ENCODE measurements at regions of chr15 and their contacts with region 1.

Region 1: DNA sequence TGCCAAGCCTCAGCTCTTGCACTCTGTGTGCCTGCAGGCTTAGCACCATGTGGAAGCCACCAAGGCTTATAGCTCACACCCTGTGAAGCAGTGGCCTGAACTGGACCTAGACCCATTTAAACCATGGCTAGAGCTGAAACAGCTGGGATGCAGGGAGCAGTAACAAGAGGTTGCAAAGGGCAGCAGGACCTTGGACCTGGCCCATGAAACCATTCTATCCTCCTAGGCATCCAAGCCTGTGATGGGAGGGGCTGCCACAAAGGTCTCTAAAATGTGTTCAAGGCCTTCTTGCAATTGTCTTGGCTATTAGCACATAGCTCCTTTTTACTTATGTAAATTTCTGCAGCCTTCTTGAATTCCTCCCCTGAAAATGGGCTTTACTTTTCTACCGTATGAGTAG is 57.9 kb upstream of the NPAP1 start:
- DNase-seq: no peak
- ATAC-seq: no peak
- H3K4me3 ChIP-seq: no peak overlapping the region
- H3K4me3 Mint-ChIP-seq: no peak overlapping the region
- H3K27ac ChIP-seq: no peak overlapping the region
- H3K27ac Mint-ChIP-seq: no peak overlapping the region
- H3K4me1 ChIP-seq: no peaks in the 10 kb centered on the region
- H3K4me1 Mint-ChIP-seq: no peaks in the 10 kb centered on the region
- H3K27me3 ChIP-seq: no peaks in the 10 kb centered on the region
- H3K27me3 Mint-ChIP-seq: no peaks in the 10 kb centered on the region
- CTCF ChIP-seq: no peak

Region 2: GRCh38 chr15:24223739-24224138 is 393.9 kb before region 1 on chr15:
- CTCF ChIA-PET with region 1: no interaction called
- POLR2A ChIA-PET with region 1: no interaction called
- intact Hi-C with region 1: no loop called
- DNase-seq: no peak
- ATAC-seq: no peak
- H3K4me3 ChIP-seq: no peak overlapping the region
- H3K4me3 Mint-ChIP-seq: no peak overlapping the region
- H3K27ac ChIP-seq: no peak overlapping the region
- H3K27ac Mint-ChIP-seq: no peak overlapping the region
- H3K4me1 ChIP-seq: no peaks in the 10 kb centered on the region
- H3K4me1 Mint-ChIP-seq: no peaks in the 10 kb centered on the region
- H3K27me3 ChIP-seq: no peaks in the 10 kb centered on the region
- H3K27me3 Mint-ChIP-seq: no peaks in the 10 kb centered on the region
- CTCF ChIP-seq: no peak

Region 3: DNA sequence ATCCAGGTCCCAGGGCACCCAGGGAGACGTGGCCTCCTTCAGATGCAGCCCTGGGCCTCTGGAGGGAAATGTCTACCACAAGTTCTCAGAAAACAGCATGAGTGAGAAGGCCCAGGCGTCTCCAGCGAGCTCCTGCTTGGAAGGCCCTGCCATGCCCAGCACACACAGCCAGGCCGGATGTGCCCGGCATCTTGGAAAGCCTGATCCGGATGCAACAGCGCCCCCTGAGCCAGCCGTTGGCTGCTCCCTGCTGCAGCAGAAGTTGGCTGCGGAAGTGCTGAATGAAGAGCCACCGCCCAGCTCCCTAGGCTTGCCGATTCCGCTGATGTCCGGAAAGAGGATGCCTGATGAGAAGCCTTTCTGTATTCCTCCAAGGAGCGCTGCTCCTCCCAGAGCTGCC is 58.8 kb after region 1 on chr15:
- CTCF ChIA-PET with region 1: no interaction called
- POLR2A ChIA-PET with region 1: no interaction called
- intact Hi-C with region 1: loop called in 1 of 2 experiments (anchors 10 kb)
- DNase-seq: no peak
- ATAC-seq: no peak
- H3K4me3 ChIP-seq: no peak overlapping the region
- H3K4me3 Mint-ChIP-seq: no peak overlapping the region
- H3K27ac ChIP-seq: no peak overlapping the region
- H3K27ac Mint-ChIP-seq: no peak overlapping the region
- H3K4me1 ChIP-seq: no peaks in the 10 kb centered on the region
- H3K4me1 Mint-ChIP-seq: no peaks in the 10 kb centered on the region
- H3K27me3 ChIP-seq: no peaks in the 10 kb centered on the region
- H3K27me3 Mint-ChIP-seq: no peaks in the 10 kb centered on the region
- CTCF ChIP-seq: no peak